ENCODE measurements at regions of chr4 and their contacts with region 1.

Region 1: DNA sequence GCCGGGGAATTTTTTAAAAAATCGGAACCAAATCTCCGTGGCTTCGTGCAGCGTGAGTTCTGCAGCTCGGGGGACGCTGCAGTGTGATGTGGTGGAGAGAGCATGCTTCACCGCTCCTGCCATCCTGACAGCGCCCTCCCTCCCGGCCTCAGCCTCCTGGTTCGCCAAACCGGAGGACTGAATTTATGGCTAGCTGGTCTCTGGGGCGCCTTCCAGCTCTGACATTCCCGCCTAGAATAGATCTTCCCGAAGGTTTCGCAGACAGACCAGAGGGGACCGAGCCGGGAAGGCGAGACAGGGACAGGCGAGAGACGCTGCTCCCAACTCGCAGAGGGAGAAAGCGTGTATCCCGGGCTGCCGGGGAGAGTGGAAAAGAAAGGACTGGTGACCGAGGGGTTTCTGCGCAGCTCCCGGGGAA is 25.9 kb downstream of the HOPX start:
- DNase-seq: peak in 4 of 9 donors; percentile 14 to 26 (median 22)
- ATAC-seq: peak; percentile 33
- H3K4me3 ChIP-seq: peak overlapping the region; percentile 66
- H3K4me3 Mint-ChIP-seq: peak overlapping the region; percentile 85 to 99 (median 90)
- H3K27ac ChIP-seq: no peak overlapping the region
- H3K27ac Mint-ChIP-seq: peak overlapping the region in 7 of 9 donors; percentile 2 to 82 (median 28)
- H3K4me1 ChIP-seq: peaks cover 16 to 36% of the 10 kb centered on the region in 2 donors
- H3K4me1 Mint-ChIP-seq: peaks cover 16 to 59% (median 34%) of the 10 kb centered on the region in 7 donors
- H3K27me3 ChIP-seq: peaks cover 0 to 3% of the 10 kb centered on the region in 2 donors
- H3K27me3 Mint-ChIP-seq: peaks cover 9 to 43% (median 33%) of the 10 kb centered on the region in 5 donors

Region 2: DNA sequence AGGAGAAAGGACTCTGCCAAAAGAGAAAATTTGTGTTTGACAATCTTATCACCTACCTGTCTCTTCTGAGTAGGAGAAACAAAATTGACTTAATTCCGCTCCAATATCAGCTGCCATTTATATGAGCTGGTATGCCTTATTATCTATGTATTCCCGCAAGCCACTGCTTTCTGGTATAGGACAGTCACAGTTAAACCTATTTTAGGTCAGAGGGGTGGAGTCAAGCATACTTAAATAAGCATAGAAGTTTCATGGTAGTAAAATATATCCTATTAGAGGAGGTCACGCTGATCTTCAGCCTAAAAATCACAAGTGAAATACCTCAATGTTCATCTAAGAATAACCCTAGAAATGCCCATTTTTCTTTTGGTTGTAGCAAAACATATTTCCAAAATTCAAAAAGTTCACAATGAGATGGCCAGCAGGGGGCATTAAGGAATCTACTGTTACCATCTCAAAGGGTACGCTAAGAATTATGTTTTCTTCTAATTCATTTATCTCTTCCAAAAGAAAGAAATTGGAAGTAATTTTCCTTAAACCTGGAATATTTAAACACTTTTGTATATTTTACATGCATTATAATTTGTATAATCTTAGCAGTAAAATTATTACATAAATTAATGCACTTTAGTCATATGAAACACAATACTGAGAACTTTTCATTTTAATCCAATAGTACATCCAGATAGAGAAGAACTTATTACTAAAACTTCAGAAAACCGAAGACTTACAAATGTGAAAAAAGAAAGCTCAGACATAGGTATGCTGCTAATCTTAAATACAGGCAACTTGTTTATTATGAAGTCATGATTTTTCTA is 230.3 kb before region 1 on chr4:
- CTCF ChIA-PET with region 1: no interaction called
- POLR2A ChIA-PET with region 1: no interaction called
- intact Hi-C with region 1: loop called in 1 of 2 experiments (anchors 5 kb)
- DNase-seq: peak in 7 of 9 donors; percentile 22 to 59 (median 48)
- ATAC-seq: peak; percentile 49
- H3K4me3 ChIP-seq: no peak overlapping the region
- H3K4me3 Mint-ChIP-seq: no peak overlapping the region
- H3K27ac ChIP-seq: no peak overlapping the region
- H3K27ac Mint-ChIP-seq: peak overlapping the region in 1 of 9 donors; percentile 1
- H3K4me1 ChIP-seq: no peaks in the 10 kb centered on the region
- H3K4me1 Mint-ChIP-seq: peaks cover 4 to 27% (median 13%) of the 10 kb centered on the region in 7 donors
- H3K27me3 ChIP-seq: no peaks in the 10 kb centered on the region
- H3K27me3 Mint-ChIP-seq: no peaks in the 10 kb centered on the region

Region 3: GRCh38 chr4:56505269-56506130 is 149.7 kb before region 1 on chr4 and contains the start of gene ARL9:
- CTCF ChIA-PET with region 1: no interaction called
- POLR2A ChIA-PET with region 1: no interaction called
- intact Hi-C with region 1: loop called in 1 of 2 experiments (anchors 5 kb)
- DNase-seq: peak; percentile 49 to 77 (median 68)
- ATAC-seq: peak; percentile 96
- H3K4me3 ChIP-seq: peak within 1 kb of the TSS; percentile 67
- H3K4me3 Mint-ChIP-seq: peak within 1 kb of the TSS; percentile 66 to 96 (median 88)
- H3K27ac ChIP-seq: peak within 1 kb of the TSS; percentile 44
- H3K27ac Mint-ChIP-seq: peak within 1 kb of the TSS in 8 of 9 donors; percentile 49 to 88 (median 72)
- H3K4me1 ChIP-seq: peaks cover 7 to 8% of the 10 kb centered on the region in 2 donors
- H3K4me1 Mint-ChIP-seq: peaks cover 13 to 20% (median 17%) of the 10 kb centered on the region in 7 donors
- H3K27me3 ChIP-seq: no peaks in the 10 kb centered on the region
- H3K27me3 Mint-ChIP-seq: peaks cover 0 to 12% (median 0%) of the 10 kb centered on the region in 5 donors
- total RNA-seq, gene ARL9: 0.19 to 0.43 TPM in 2 of 5 experiments, not detected in the others

Region 4: DNA sequence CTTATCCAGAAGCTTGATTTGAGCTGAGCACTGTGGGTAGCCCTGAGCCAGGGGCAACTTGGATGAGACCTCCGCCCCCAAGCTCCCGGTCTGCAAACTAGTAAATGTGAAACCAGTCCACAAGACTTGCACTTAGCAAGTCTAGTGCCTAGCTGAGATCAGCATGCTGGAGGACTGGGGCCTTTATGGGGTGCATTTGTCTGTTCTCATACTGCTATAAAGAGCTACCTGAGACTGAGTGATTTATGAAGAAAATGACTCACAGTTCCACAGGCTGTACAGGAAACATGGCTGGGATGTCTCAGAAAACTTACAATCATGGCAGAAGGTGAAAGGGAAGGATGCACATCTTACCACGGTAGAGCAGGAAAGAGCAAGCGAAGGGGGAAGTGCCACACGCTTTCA is 68.0 kb after region 1 on chr4:
- CTCF ChIA-PET with region 1: no interaction called
- POLR2A ChIA-PET with region 1: no interaction called
- intact Hi-C with region 1: loop called in 1 of 2 experiments (anchors 2 kb)
- DNase-seq: peak in 1 of 9 donors; percentile 35
- ATAC-seq: no peak
- H3K4me3 ChIP-seq: no peak overlapping the region
- H3K4me3 Mint-ChIP-seq: peak overlapping the region in 1 of 10 donors; percentile 8
- H3K27ac ChIP-seq: no peak overlapping the region
- H3K27ac Mint-ChIP-seq: peak overlapping the region in 2 of 9 donors; percentile 3 to 17
- H3K4me1 ChIP-seq: no peaks in the 10 kb centered on the region
- H3K4me1 Mint-ChIP-seq: peaks cover 0 to 16% (median 6%) of the 10 kb centered on the region in 7 donors
- H3K27me3 ChIP-seq: no peaks in the 10 kb centered on the region
- H3K27me3 Mint-ChIP-seq: no peaks in the 10 kb centered on the region

Region 5: GRCh38 chr4:56757821-56758411 is 102.7 kb after region 1 on chr4:
- CTCF ChIA-PET with region 1: no interaction called
- POLR2A ChIA-PET with region 1: no interaction called
- intact Hi-C with region 1: loop called in 1 of 2 experiments (anchors 5 kb)
- DNase-seq: peak; percentile 12 to 85 (median 68)
- ATAC-seq: peak; percentile 88
- H3K4me3 ChIP-seq: peak overlapping the region; percentile 46
- H3K4me3 Mint-ChIP-seq: peak overlapping the region; percentile 71 to 91 (median 85)
- H3K27ac ChIP-seq: peak overlapping the region; percentile 65
- H3K27ac Mint-ChIP-seq: peak overlapping the region; percentile 76 to 99 (median 92)
- H3K4me1 ChIP-seq: peaks cover 28 to 29% of the 10 kb centered on the region in 2 donors
- H3K4me1 Mint-ChIP-seq: peaks cover 39 to 76% (median 57%) of the 10 kb centered on the region in 7 donors
- H3K27me3 ChIP-seq: no peaks in the 10 kb centered on the region
- H3K27me3 Mint-ChIP-seq: peaks cover 0 to 14% (median 0%) of the 10 kb centered on the region in 5 donors

Measured in naive thymus-derived CD4-positive, alpha-beta T cell (primary cell).